K562 (cell line): ENCODE measurements at regions of chr14 and their contacts with region 1.

Region 1: DNA sequence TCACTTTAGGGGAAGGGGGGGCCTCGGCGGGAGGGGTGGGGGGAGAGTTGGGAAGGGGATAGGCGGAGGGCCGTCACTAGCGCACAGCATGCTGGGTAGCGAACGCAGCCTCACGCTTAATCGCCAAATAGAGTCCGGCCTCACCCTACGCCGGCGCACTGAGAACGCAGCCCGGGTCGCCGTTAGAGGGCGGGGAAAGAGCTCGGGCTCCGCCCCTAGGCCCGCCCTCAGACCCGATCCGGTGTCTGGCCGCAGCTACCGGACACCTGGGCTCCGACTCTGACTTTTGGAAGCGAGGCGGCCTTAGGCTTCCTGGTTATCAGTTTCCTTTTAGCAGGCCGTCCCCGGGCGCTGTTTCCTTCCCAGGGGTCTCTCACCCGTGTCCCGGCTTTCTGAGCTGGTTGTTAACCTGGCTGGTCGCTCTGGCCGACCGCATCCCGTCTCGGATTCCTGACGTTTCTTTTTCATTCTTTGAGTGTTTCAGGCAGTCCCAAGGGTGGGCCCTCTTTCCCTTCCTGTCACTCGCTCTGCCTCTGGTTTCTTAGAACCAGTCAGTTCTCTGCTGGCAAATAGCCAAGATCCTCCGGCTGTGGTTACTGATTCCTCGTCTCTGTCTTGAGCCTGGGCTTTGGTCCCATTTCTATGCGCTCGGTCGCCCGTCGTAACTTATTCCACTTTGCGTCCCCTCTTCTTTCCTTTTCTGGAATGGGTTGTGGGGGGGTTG is 378 bp upstream of the STRN3 start:
- DNase-seq: peak; percentile 84 to 96 (median 88)
- ATAC-seq: peak; percentile 89
- H3K4me3 ChIP-seq: peak overlapping the region; percentile 98
- H3K27ac ChIP-seq: peak overlapping the region; percentile 89
- H3K4me1 ChIP-seq: peaks cover 5 to 29% of the 10 kb centered on the region in 2 experiments
- H3K27me3 ChIP-seq: no peaks in the 10 kb centered on the region
- CTCF ChIP-seq: no peak
- EP300 ChIP-seq: peak; percentile 23; the same call in 1 of the 2 replicates
- POLR2A ChIP-seq: peak; percentile 88
- RAD21 ChIP-seq: peak in 1 of 2 experiments; percentile 23; a peak in 1 of 4 replicates

Region 2: DNA sequence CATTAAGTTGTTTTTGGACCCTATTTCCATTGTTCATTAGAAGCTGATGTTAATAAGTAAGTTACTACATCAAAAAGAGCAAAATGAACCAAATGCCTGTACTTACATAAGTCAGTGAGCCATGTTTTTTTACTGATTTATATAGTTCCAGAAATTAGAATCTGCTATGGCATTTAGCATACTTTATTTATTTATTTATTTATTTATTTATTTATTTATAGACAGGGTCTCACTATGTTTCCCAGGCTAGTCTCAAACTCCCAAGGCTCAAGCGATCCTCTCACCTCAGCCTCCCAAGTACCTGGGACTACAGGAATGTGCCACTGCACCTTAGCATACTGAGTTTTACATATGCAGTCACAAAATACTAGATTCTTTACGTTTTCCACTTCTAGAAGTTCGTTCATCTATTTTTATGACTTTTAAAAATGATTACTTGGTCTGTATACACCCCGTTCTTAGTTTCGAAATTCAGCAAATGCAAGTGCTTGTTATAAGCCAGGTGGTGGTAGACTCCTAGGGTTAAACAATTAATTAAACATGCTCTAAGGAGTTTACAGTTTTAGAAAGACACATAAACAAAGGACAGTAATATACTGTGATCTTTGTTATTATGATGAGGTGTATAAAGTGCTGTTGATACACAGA is 334.7 kb before region 1 on chr14:
- CTCF ChIA-PET with region 1: no interaction called
- POLR2A ChIA-PET with region 1: no interaction called
- in situ Hi-C with region 1: no loop called
- intact Hi-C with region 1: no loop called
- DNase-seq: no peak
- ATAC-seq: no peak
- H3K4me3 ChIP-seq: no peak overlapping the region
- H3K27ac ChIP-seq: no peak overlapping the region
- H3K4me1 ChIP-seq: no peaks in the 10 kb centered on the region
- H3K27me3 ChIP-seq: no peaks in the 10 kb centered on the region
- CTCF ChIP-seq: no peak
- EP300 ChIP-seq: no peak
- POLR2A ChIP-seq: no peak
- RAD21 ChIP-seq: no peak

Region 3: DNA sequence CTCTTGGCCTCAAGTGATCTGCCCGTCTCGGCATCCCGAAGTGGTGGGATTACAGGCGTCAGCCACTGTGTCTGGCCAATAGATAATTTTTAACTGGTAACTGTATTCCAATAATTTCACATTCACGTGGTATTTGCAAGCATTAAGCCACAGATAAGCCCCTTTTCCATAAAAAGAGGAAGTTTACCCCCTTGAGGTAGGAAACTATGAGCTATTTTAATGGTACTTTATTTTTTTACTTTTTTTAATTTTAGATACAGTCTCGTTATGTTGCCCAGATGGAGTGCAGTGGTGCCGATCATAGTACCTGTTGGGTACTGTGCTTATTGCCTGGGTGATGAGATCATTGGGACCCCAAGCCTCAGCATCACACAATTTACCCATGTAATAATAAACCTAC is 44.0 kb before region 1 on chr14:
- CTCF ChIA-PET with region 1: no interaction called
- POLR2A ChIA-PET with region 1: interaction called, 5 read pairs
- in situ Hi-C with region 1: no loop called
- intact Hi-C with region 1: loop called (anchors 2 kb)
- DNase-seq: no peak
- ATAC-seq: no peak
- H3K4me3 ChIP-seq: no peak overlapping the region
- H3K27ac ChIP-seq: peak overlapping the region; percentile 18; the same call in 2 of the 3 replicates
- H3K4me1 ChIP-seq: peaks cover 0 to 3% of the 10 kb centered on the region in 2 experiments; a peak in 3 of 5 replicates
- H3K27me3 ChIP-seq: no peaks in the 10 kb centered on the region
- CTCF ChIP-seq: no peak
- EP300 ChIP-seq: no peak
- POLR2A ChIP-seq: no peak
- RAD21 ChIP-seq: no peak

Region 4: GRCh38 chr14:31038521-31039166 is 12.1 kb after region 1 on chr14:
- CTCF ChIA-PET with region 1: no interaction called
- POLR2A ChIA-PET with region 1: interaction called, 17 read pairs
- in situ Hi-C with region 1: no loop called
- intact Hi-C with region 1: no loop called
- DNase-seq: peak in 2 of 4 experiments; percentile 55 to 78
- ATAC-seq: peak; percentile 80
- H3K4me3 ChIP-seq: no peak overlapping the region
- H3K27ac ChIP-seq: peak overlapping the region; percentile 88
- H3K4me1 ChIP-seq: peaks cover 17 to 25% of the 10 kb centered on the region in 2 experiments; a peak in 4 of 5 replicates
- H3K27me3 ChIP-seq: no peaks in the 10 kb centered on the region
- CTCF ChIP-seq: no peak
- EP300 ChIP-seq: peak; percentile 80; the same call in 1 of the 2 replicates
- POLR2A ChIP-seq: no peak
- RAD21 ChIP-seq: no peak

Region 5: GRCh38 chr14:31059152-31059924 is 32.8 kb after region 1 on chr14:
- CTCF ChIA-PET with region 1: no interaction called
- POLR2A ChIA-PET with region 1: interaction called, 12 read pairs
- in situ Hi-C with region 1: no loop called
- intact Hi-C with region 1: loop called (anchors 1 kb)
- DNase-seq: peak; percentile 72 to 96 (median 82)
- ATAC-seq: peak; percentile 86
- H3K4me3 ChIP-seq: no peak overlapping the region
- H3K27ac ChIP-seq: peak overlapping the region; percentile 82
- H3K4me1 ChIP-seq: peaks cover 14 to 36% of the 10 kb centered on the region in 2 experiments; a peak in 4 of 5 replicates
- H3K27me3 ChIP-seq: no peaks in the 10 kb centered on the region
- CTCF ChIP-seq: no peak
- EP300 ChIP-seq: peak; percentile 99
- POLR2A ChIP-seq: no peak
- RAD21 ChIP-seq: peak; percentile 10 to 33; a peak in 2 of 4 replicates

Region 6: GRCh38 chr14:31084385-31084784 is 57.8 kb after region 1 on chr14:
- CTCF ChIA-PET with region 1: no interaction called
- POLR2A ChIA-PET with region 1: interaction called, 5 read pairs
- in situ Hi-C with region 1: no loop called
- intact Hi-C with region 1: loop called (anchors 2 kb)
- DNase-seq: peak; percentile 19 to 41 (median 37)
- ATAC-seq: peak; percentile 87
- H3K4me3 ChIP-seq: no peak overlapping the region
- H3K27ac ChIP-seq: no peak overlapping the region
- H3K4me1 ChIP-seq: peaks cover 0 to 6% of the 10 kb centered on the region in 2 experiments; a peak in 3 of 5 replicates
- H3K27me3 ChIP-seq: no peaks in the 10 kb centered on the region
- CTCF ChIP-seq: peak; percentile 33 to 43 (median 40)
- EP300 ChIP-seq: no peak
- POLR2A ChIP-seq: no peak
- RAD21 ChIP-seq: peak in 1 of 2 experiments; percentile 46; a peak in 2 of 4 replicates

Region 7: GRCh38 chr14:31096255-31096654 is 69.7 kb after region 1 on chr14:
- CTCF ChIA-PET with region 1: no interaction called
- POLR2A ChIA-PET with region 1: no interaction called
- in situ Hi-C with region 1: no loop called
- intact Hi-C with region 1: no loop called
- DNase-seq: no peak
- ATAC-seq: peak; percentile 16; the same call in 1 of the 3 replicates
- H3K4me3 ChIP-seq: no peak overlapping the region
- H3K27ac ChIP-seq: no peak overlapping the region
- H3K4me1 ChIP-seq: no peaks in the 10 kb centered on the region
- H3K27me3 ChIP-seq: no peaks in the 10 kb centered on the region
- CTCF ChIP-seq: no peak
- EP300 ChIP-seq: no peak
- POLR2A ChIP-seq: no peak
- RAD21 ChIP-seq: no peak